Activated naive CD8-positive, alpha-beta T cell treated with anti-CD3 and anti-CD28 coated beads, Interleukin-2, amount 10 ng/mL, durations not matched to agents 7 days and 5 days (primary cell): ENCODE measurements at regions of chr1 and their contacts with region 1.

Region 1: GRCh38 chr1:24502709-24503058 is at the start of gene RCAN3:
- DNase-seq: peak; percentile 95
- ATAC-seq: peak; percentile 74
- H3K4me3 Mint-ChIP-seq: peak within 1 kb of the TSS; percentile 92
- H3K27ac Mint-ChIP-seq: peak within 1 kb of the TSS; percentile 97
- H3K4me1 Mint-ChIP-seq: peaks cover 53% of the 10 kb centered on the region
- H3K27me3 Mint-ChIP-seq: no peaks in the 10 kb centered on the region
- total RNA-seq, gene RCAN3: 77.4 to 84.8 TPM

Region 2: DNA sequence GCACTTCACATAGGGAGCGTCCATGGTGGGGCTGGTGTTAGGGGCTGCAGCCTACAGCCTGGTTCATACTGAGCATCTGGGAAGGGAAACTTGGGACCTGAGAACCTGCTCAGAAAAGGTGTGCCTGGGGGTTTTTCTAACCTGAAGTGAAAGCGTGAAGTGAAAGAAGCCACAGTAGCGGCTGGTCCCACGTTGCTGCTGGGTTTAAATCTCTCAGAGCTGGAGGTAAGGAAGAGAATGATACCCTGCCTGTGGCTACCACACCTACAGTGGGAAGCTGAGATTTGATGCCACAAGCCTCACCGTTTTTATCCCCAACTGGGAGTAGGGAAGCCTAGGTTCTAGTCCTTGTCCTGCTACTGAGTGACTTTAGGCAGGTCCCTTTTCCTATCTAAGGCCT is 613.6 kb before region 1 on chr1:
- POLR2A ChIA-PET with region 1: no interaction called
- DNase-seq: no peak
- ATAC-seq: no peak
- H3K4me3 Mint-ChIP-seq: no peak overlapping the region
- H3K27ac Mint-ChIP-seq: no peak overlapping the region
- H3K4me1 Mint-ChIP-seq: no peaks in the 10 kb centered on the region
- H3K27me3 Mint-ChIP-seq: peaks cover 29% of the 10 kb centered on the region

Region 3: DNA sequence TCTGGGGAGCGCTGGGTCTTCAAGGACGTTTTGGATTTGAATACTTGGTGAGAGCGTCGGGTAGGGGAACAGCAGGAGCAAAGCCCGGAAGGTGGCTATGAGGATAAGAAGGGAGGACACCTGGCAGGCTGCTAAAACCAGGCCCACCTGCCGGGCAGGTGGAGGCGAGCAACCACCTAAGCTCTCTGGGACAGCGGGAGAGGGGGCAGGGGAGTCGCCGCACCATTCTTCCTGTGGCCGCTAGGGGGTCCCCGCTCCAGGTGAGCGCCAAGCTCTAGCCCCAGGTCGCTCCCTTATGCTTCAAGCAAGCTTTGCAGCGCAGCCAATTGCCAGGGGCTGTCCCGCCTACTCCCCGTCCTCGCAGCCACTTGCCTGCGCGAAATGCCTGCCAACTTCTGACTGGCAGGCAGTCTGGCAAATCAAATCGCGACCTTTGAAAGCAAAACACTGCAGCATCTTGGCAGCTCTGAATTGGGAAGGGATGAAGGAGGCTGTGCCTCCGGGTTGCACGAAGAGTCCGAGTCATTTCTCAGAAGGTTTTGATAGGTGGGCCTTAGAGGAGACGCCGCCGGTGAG is 87.3 kb before region 1 on chr1 and contains the start of gene NIPAL3:
- POLR2A ChIA-PET with region 1: interaction called, 203 read pairs
- DNase-seq: peak; percentile 92
- ATAC-seq: peak; percentile 96
- H3K4me3 Mint-ChIP-seq: peak within 1 kb of the TSS; percentile 88
- H3K27ac Mint-ChIP-seq: peak within 1 kb of the TSS; percentile 76
- H3K4me1 Mint-ChIP-seq: peaks cover 37% of the 10 kb centered on the region
- H3K27me3 Mint-ChIP-seq: no peaks in the 10 kb centered on the region
- total RNA-seq, gene NIPAL3: 54.1 to 55.1 TPM

Region 4: GRCh38 chr1:24481101-24481500 is 21.6 kb before region 1 on chr1:
- POLR2A ChIA-PET with region 1: interaction called, 562 read pairs
- DNase-seq: no peak
- ATAC-seq: peak; percentile 74
- H3K4me3 Mint-ChIP-seq: peak overlapping the region; percentile 79
- H3K27ac Mint-ChIP-seq: peak overlapping the region; percentile 90
- H3K4me1 Mint-ChIP-seq: peaks cover 48% of the 10 kb centered on the region
- H3K27me3 Mint-ChIP-seq: no peaks in the 10 kb centered on the region

Region 5: DNA sequence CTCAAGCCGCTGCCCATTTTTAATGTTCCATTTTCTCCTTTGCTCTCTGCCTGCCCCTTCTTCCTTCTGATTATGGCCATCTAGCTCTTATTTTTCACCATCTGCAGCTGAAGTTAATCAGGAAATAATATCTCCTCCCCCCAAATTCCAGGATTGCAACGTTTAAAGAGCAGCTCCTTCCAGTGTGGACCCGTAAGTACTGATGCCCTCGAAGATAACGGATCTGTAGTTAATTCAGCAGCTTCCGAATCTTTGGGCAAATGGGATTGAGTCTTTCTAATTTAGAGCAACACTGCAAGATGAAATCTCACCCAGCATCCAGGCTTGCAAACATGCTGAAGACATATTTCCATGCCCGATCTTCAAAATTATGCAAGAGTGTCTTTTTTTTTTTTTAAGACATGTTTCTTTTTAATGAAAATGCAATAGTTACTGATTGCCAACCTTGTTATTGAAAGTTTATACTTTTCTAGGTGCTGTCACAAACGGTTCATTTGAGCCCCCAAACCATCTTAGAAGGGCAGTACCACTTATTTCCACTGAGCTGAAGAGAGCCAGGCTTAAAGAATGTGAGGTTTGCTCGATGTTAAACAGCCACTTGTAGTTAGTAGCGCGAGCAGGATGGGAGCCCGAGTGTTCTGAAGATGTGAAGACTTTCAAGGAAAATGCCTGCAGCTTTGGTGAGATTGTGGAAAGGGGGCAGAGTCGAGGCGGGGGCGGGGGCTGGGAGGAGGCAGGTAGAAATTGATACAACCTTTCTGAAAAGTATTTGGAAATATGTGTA is 10.9 kb before region 1 on chr1:
- POLR2A ChIA-PET with region 1: interaction called, 562 read pairs
- DNase-seq: no peak
- ATAC-seq: no peak
- H3K4me3 Mint-ChIP-seq: no peak overlapping the region
- H3K27ac Mint-ChIP-seq: no peak overlapping the region
- H3K4me1 Mint-ChIP-seq: peaks cover 22% of the 10 kb centered on the region
- H3K27me3 Mint-ChIP-seq: no peaks in the 10 kb centered on the region

Region 6: GRCh38 chr1:24526940-24527542 is 24.4 kb after region 1 on chr1:
- POLR2A ChIA-PET with region 1: interaction called, 18 read pairs
- DNase-seq: no peak
- ATAC-seq: peak; percentile 70
- H3K4me3 Mint-ChIP-seq: no peak overlapping the region
- H3K27ac Mint-ChIP-seq: no peak overlapping the region
- H3K4me1 Mint-ChIP-seq: peaks cover 13% of the 10 kb centered on the region
- H3K27me3 Mint-ChIP-seq: no peaks in the 10 kb centered on the region

Region 7: GRCh38 chr1:24536391-24536840 is 33.7 kb after region 1 on chr1:
- POLR2A ChIA-PET with region 1: interaction called, 45 read pairs
- DNase-seq: peak; percentile 55
- ATAC-seq: peak; percentile 61
- H3K4me3 Mint-ChIP-seq: peak overlapping the region; percentile 88
- H3K27ac Mint-ChIP-seq: peak overlapping the region; percentile 97
- H3K4me1 Mint-ChIP-seq: peaks cover 47% of the 10 kb centered on the region
- H3K27me3 Mint-ChIP-seq: no peaks in the 10 kb centered on the region

Region 8: GRCh38 chr1:24642481-24643361 is 140.0 kb after region 1 on chr1 and contains the start of gene SRRM1:
- POLR2A ChIA-PET with region 1: interaction called, 14 read pairs
- DNase-seq: peak; percentile 98
- ATAC-seq: peak; percentile 95
- H3K4me3 Mint-ChIP-seq: peak within 1 kb of the TSS; percentile 93
- H3K27ac Mint-ChIP-seq: peak within 1 kb of the TSS; percentile 97
- H3K4me1 Mint-ChIP-seq: peaks cover 27% of the 10 kb centered on the region
- H3K27me3 Mint-ChIP-seq: no peaks in the 10 kb centered on the region
- total RNA-seq, gene SRRM1: 211 to 220 TPM